ENCODE measurements at regions of chr7 and their contacts with region 1.

Region 1: DNA sequence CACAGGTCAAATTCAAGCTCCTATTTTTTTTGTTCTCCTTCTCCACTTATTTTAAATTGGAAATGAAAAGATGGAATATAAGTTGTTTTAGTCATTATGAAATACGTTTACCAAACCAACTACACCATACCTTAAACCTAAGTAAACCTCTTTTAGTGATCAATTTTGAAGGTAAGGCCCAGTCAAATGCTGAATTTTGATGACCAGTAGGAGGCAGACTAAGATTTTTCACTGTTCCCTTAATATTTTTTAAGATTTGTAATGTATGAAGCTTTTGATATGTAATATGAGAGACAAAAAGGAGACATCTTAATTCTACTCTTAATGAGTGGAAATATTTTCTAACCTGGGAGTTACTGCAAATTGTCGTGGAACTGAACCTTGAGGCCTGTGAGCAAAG is 311.6 kb downstream of the EXOC4 start:
- DNase-seq: no peak
- H3K4me3 ChIP-seq: no peak overlapping the region
- H3K27ac ChIP-seq: no peak overlapping the region
- H3K4me1 ChIP-seq: no peaks in the 10 kb centered on the region
- H3K27me3 ChIP-seq: no peaks in the 10 kb centered on the region
- CTCF ChIP-seq: peak; percentile 37; the same call in 1 of the 2 replicates

Region 2: DNA sequence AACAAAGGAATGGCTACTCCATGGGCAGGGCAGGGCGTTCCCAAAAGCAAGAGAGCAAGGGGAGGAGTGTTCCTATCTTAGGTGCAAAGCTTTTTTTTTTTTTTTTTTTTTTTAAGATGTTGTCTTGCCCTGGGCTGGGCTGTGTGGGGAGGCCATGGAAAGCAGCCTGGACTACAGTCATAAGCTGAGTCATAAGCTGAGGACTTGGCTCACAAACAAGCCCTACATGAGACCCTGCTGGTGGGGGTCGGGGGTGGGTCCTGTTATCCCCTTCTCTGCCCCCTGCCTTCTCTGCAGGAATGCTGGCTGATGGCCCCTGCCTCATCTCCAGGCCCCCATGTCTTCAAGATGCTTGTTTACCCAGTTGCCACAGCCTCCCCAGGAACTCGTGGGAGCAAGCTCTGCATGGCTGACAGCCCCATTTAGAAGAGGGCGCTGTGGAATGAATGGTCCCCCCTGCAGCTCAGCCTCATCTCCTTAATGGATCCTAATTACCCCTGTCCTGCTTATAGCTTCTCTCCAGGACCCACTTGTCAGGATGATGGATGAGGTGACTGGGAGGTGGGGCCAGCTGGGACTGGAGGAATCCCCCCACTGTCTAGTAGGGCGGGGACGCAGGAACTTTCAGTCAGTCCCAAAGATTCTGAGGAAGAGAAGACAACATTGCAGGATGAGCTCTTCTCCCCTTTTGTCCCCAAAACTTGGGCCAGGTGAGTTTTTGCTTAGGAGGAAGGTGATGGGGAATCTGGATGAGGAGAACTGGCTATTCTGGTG is 1667.3 kb before region 1 on chr7:
- CTCF ChIA-PET with region 1: no interaction called
- POLR2A ChIA-PET with region 1: interaction called, 12 read pairs
- intact Hi-C with region 1: no loop called
- DNase-seq: peak; percentile 95
- H3K4me3 ChIP-seq: no peak overlapping the region
- H3K27ac ChIP-seq: no peak overlapping the region
- H3K4me1 ChIP-seq: peaks cover 31% of the 10 kb centered on the region
- H3K27me3 ChIP-seq: no peaks in the 10 kb centered on the region
- CTCF ChIP-seq: no peak

Region 3: GRCh38 chr7:133629701-133630100 is 65.2 kb after region 1 on chr7:
- CTCF ChIA-PET with region 1: no interaction called
- POLR2A ChIA-PET with region 1: no interaction called
- intact Hi-C with region 1: loop called (anchors 10 kb)
- DNase-seq: no peak
- H3K4me3 ChIP-seq: no peak overlapping the region
- H3K27ac ChIP-seq: no peak overlapping the region
- H3K4me1 ChIP-seq: no peaks in the 10 kb centered on the region
- H3K27me3 ChIP-seq: no peaks in the 10 kb centered on the region
- CTCF ChIP-seq: no peak

Region 4: GRCh38 chr7:133698127-133698526 is 133.6 kb after region 1 on chr7:
- CTCF ChIA-PET with region 1: no interaction called
- POLR2A ChIA-PET with region 1: no interaction called
- intact Hi-C with region 1: no loop called
- DNase-seq: no peak
- H3K4me3 ChIP-seq: no peak overlapping the region
- H3K27ac ChIP-seq: no peak overlapping the region
- H3K4me1 ChIP-seq: no peaks in the 10 kb centered on the region
- H3K27me3 ChIP-seq: no peaks in the 10 kb centered on the region
- CTCF ChIP-seq: no peak

Region 5: GRCh38 chr7:133709036-133709880 is 144.8 kb after region 1 on chr7:
- CTCF ChIA-PET with region 1: no interaction called
- POLR2A ChIA-PET with region 1: no interaction called
- intact Hi-C with region 1: no loop called
- DNase-seq: no peak
- H3K4me3 ChIP-seq: no peak overlapping the region
- H3K27ac ChIP-seq: no peak overlapping the region
- H3K4me1 ChIP-seq: no peaks in the 10 kb centered on the region
- H3K27me3 ChIP-seq: no peaks in the 10 kb centered on the region
- CTCF ChIP-seq: no peak

Measured in A673 (cell line).